Naive thymus-derived CD4-positive, alpha-beta T cell (primary cell): ENCODE measurements at regions of chr3 and their contacts with region 1.

Region 1: DNA sequence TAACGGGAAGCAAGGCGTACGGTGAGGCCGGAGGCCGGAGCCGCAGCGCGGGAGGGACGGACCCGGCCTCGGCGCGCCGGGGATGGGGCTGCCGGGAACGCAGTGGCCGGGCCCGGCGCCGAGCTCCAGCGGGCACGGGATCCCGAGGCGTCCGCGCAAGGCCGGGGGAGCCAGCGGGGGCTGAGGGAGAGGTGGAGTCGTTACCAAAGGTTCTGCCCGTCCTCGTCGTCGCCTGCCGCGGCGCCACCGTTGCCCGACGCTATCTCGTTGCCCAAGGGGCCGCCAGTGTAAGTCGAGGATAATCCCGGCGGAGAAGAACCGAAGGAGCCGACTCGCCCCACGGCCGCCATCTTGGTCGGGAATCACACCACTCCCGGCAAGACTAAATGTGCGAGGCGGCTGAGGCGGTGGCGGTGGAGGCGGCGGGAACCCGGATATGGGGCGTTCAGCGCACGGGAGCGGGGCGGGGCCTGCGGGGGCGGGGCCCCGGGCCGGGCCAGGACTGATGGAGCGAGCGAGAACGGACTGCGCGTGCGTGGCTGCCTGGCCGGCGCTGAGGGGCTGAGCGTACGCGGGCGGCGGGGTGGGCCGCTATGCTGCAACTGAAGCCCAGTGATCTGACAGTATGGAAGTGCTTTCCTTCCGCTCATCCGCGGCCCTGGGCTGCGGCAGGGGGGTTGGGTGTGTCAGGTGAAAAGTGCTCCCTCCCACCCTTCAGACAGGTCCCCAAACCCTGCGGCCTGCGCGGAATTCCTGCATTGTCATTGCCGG is at the start of gene DYNC1LI1:
- DNase-seq: peak; percentile 81 to 96 (median 88)
- ATAC-seq: peak; percentile 98
- H3K4me3 ChIP-seq: peak within 1 kb of the TSS; percentile 68
- H3K4me3 Mint-ChIP-seq: peak within 1 kb of the TSS; percentile 84 to 96 (median 92)
- H3K27ac ChIP-seq: peak within 1 kb of the TSS; percentile 90
- H3K27ac Mint-ChIP-seq: peak within 1 kb of the TSS; percentile 71 to 93 (median 86)
- H3K4me1 ChIP-seq: peaks cover 5 to 17% of the 10 kb centered on the region in 2 donors
- H3K4me1 Mint-ChIP-seq: peaks cover 0 to 39% (median 31%) of the 10 kb centered on the region in 7 donors
- H3K27me3 ChIP-seq: no peaks in the 10 kb centered on the region
- H3K27me3 Mint-ChIP-seq: no peaks in the 10 kb centered on the region
- total RNA-seq, gene DYNC1LI1: 26.1 to 28.5 (median 27.5) TPM

Region 2: GRCh38 chr3:32106280-32106928 is 464.2 kb before region 1 on chr3 and contains the start of gene GPD1L:
- CTCF ChIA-PET with region 1: no interaction called
- POLR2A ChIA-PET with region 1: no interaction called
- intact Hi-C with region 1: loop called in 1 of 2 experiments (anchors 2 kb)
- DNase-seq: peak; percentile 75 to 96 (median 86)
- ATAC-seq: peak; percentile 99
- H3K4me3 ChIP-seq: peak within 1 kb of the TSS; percentile 77
- H3K4me3 Mint-ChIP-seq: peak within 1 kb of the TSS; percentile 86 to 97 (median 94)
- H3K27ac ChIP-seq: peak within 1 kb of the TSS; percentile 68
- H3K27ac Mint-ChIP-seq: peak within 1 kb of the TSS; percentile 77 to 96 (median 82)
- H3K4me1 ChIP-seq: peaks cover 14 to 15% of the 10 kb centered on the region in 2 donors
- H3K4me1 Mint-ChIP-seq: peaks cover 14 to 44% (median 39%) of the 10 kb centered on the region in 7 donors
- H3K27me3 ChIP-seq: no peaks in the 10 kb centered on the region
- H3K27me3 Mint-ChIP-seq: no peaks in the 10 kb centered on the region
- total RNA-seq, gene GPD1L: 14.1 to 23.8 (median 21.4) TPM

Region 3: GRCh38 chr3:32391643-32392535 is 178.7 kb before region 1 on chr3 and contains the start of gene CMTM7:
- CTCF ChIA-PET with region 1: no interaction called
- POLR2A ChIA-PET with region 1: interaction called, 3 read pairs
- intact Hi-C with region 1: loop called in 1 of 2 experiments (anchors 5 kb)
- DNase-seq: peak; percentile 33 to 68 (median 62)
- ATAC-seq: peak; percentile 75
- H3K4me3 ChIP-seq: peak within 1 kb of the TSS; percentile 81
- H3K4me3 Mint-ChIP-seq: peak within 1 kb of the TSS; percentile 84 to 99 (median 98)
- H3K27ac ChIP-seq: peak within 1 kb of the TSS; percentile 83
- H3K27ac Mint-ChIP-seq: peak within 1 kb of the TSS; percentile 93 to 100 (median 98)
- H3K4me1 ChIP-seq: peaks cover 17 to 25% of the 10 kb centered on the region in 2 donors
- H3K4me1 Mint-ChIP-seq: peaks cover 30 to 70% (median 55%) of the 10 kb centered on the region in 7 donors
- H3K27me3 ChIP-seq: no peaks in the 10 kb centered on the region
- H3K27me3 Mint-ChIP-seq: no peaks in the 10 kb centered on the region
- total RNA-seq, gene CMTM7: 38.6 to 60.1 (median 49.5) TPM

Region 4: DNA sequence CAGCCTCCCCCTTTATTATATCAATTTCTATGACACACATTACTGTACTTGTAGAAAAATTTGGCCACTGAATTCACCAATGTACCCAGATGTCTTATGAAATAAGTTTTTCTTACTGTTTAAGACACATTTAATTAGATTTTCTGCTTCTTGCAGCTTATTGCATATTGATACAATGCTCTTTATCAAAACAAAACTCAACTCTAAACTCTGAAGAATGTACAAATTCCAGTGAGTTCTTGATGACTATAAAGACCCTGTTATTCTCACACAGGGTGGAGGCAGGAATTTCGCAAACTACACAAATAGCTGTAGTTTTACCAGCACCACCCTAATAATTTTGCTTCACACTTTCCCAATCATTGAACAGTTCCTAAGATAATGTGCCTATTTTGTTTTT is 90.0 kb before region 1 on chr3:
- CTCF ChIA-PET with region 1: no interaction called
- POLR2A ChIA-PET with region 1: no interaction called
- intact Hi-C with region 1: no loop called
- DNase-seq: no peak
- ATAC-seq: no peak
- H3K4me3 ChIP-seq: no peak overlapping the region
- H3K4me3 Mint-ChIP-seq: no peak overlapping the region
- H3K27ac ChIP-seq: no peak overlapping the region
- H3K27ac Mint-ChIP-seq: peak overlapping the region in 2 of 9 donors; percentile 5 to 11
- H3K4me1 ChIP-seq: no peaks in the 10 kb centered on the region
- H3K4me1 Mint-ChIP-seq: peaks cover 17 to 43% (median 22%) of the 10 kb centered on the region in 7 donors
- H3K27me3 ChIP-seq: no peaks in the 10 kb centered on the region
- H3K27me3 Mint-ChIP-seq: no peaks in the 10 kb centered on the region

Region 5: DNA sequence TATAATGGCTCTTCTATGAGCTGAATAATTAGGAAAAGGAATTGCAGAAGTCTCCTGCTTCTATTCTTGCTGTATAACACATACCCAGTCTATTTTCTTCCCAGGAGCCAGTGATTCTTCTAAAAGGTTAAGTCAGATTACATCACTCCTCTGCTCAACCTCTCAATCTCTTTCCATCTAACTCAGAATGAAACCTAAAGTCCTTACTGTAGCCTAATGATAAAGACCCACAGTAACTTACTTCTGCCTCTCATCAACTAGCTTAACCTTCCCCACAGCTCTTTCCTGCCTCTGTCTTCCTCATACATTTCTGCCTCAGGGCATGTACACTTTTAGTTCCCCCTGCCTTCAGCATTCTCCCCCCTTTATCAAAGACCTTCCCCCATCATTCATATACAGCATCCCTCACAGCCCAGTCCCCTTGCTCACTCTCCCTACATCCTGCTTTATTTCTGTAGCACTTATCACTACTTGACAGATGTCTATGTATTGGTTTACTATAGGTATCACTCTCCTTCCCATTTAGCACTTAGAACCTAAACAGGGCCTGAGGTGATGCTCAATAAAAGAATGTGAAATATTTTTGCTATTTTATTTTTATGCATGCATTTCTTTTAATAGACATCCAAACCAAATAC is 39.5 kb before region 1 on chr3:
- CTCF ChIA-PET with region 1: no interaction called
- POLR2A ChIA-PET with region 1: no interaction called
- intact Hi-C with region 1: loop called in 1 of 2 experiments (anchors 5 kb)
- DNase-seq: no peak
- ATAC-seq: no peak
- H3K4me3 ChIP-seq: no peak overlapping the region
- H3K4me3 Mint-ChIP-seq: no peak overlapping the region
- H3K27ac ChIP-seq: no peak overlapping the region
- H3K27ac Mint-ChIP-seq: peak overlapping the region in 5 of 9 donors; percentile 1 to 43 (median 26)
- H3K4me1 ChIP-seq: no peaks in the 10 kb centered on the region
- H3K4me1 Mint-ChIP-seq: peaks cover 0 to 6% (median 0%) of the 10 kb centered on the region in 7 donors
- H3K27me3 ChIP-seq: no peaks in the 10 kb centered on the region
- H3K27me3 Mint-ChIP-seq: no peaks in the 10 kb centered on the region

Region 6: DNA sequence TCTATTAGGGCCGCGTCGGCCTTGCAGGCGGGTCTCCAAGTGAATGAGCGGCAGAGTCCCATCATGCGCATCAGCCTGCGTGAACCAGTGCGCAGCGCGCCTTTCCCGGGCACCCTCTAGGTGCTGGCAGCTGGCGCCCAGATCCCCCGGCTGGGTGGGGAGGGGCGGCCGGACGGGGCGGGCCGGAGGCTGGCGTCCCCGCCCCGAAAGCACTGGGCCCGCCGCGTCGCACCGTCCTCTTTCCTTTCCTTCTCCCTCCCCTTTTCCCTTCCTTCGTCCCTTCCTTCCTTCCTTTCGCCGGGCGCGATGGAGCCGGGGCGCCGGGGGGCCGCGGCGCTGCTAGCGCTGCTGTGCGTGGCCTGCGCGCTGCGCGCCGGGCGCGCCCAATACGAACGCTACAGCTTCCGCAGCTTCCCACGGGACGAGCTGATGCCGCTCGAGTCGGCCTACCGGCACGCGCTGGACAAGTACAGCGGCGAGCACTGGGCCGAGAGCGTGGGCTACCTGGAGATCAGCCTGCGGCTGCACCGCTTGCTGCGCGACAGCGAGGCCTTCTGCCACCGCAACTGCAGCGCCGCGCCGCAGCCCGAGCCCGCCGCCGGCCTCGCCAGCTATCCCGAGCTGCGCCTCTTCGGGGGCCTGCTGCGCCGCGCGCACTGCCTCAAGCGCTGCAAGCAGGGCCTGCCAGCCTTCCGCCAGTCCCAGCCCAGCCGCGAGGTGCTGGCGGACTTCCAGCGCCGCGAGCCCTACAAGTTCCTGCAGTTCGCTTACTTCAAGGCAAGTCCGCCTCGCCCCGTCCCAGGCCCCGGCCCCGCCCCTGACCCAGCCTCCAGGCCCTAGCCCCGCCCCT is 543.4 kb after region 1 on chr3 and contains the start of gene CRTAP:
- CTCF ChIA-PET with region 1: no interaction called
- POLR2A ChIA-PET with region 1: no interaction called
- intact Hi-C with region 1: loop called in 1 of 2 experiments (anchors 5 kb)
- DNase-seq: peak; percentile 69 to 86 (median 79)
- ATAC-seq: peak; percentile 92
- H3K4me3 ChIP-seq: peak within 1 kb of the TSS; percentile 82
- H3K4me3 Mint-ChIP-seq: peak within 1 kb of the TSS; percentile 88 to 95 (median 92)
- H3K27ac ChIP-seq: peak within 1 kb of the TSS; percentile 69
- H3K27ac Mint-ChIP-seq: peak within 1 kb of the TSS; percentile 75 to 91 (median 85)
- H3K4me1 ChIP-seq: peaks cover 17 to 23% of the 10 kb centered on the region in 2 donors
- H3K4me1 Mint-ChIP-seq: peaks cover 23 to 52% (median 37%) of the 10 kb centered on the region in 7 donors
- H3K27me3 ChIP-seq: no peaks in the 10 kb centered on the region
- H3K27me3 Mint-ChIP-seq: no peaks in the 10 kb centered on the region
- total RNA-seq, gene CRTAP: 27.1 to 86.1 (median 46.4) TPM

Region 7: DNA sequence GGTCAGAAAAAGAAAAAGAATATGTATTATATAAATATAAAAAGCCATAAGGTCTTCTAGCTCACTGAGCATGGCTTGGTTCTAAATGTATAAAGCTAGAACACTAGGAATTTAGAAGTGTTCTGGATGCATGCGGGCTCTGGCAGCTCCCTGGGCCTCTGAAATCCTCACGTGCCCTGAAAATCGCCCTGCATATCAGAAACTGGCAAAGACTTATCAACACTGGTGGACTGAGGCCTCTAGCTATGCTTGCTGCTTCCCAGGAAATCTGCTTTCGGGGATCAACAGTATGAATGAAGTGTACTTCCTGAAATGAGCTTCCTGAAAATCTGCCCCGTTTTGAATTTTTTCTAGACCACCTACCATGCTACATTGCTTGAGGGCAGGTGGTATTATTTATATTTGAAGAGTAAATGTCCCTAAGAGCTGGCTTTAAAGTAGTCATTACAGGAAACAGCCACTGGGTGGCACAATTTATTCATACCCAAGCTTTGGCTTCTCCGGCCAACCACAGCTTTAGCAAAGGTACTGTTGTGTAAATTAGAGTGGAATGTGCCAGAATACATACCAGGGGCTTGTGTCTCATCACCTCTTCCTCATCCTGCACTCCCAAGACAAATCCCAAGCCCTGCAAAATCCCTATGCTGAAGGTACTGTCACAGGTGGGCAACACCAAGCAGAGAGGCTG is 560.9 kb after region 1 on chr3:
- CTCF ChIA-PET with region 1: no interaction called
- POLR2A ChIA-PET with region 1: no interaction called
- intact Hi-C with region 1: no loop called
- DNase-seq: peak in 6 of 9 donors; percentile 5 to 46 (median 37)
- ATAC-seq: peak; percentile 80
- H3K4me3 ChIP-seq: no peak overlapping the region
- H3K4me3 Mint-ChIP-seq: no peak overlapping the region
- H3K27ac ChIP-seq: no peak overlapping the region
- H3K27ac Mint-ChIP-seq: no peak overlapping the region
- H3K4me1 ChIP-seq: no peaks in the 10 kb centered on the region
- H3K4me1 Mint-ChIP-seq: peaks cover 2 to 12% (median 11%) of the 10 kb centered on the region in 7 donors
- H3K27me3 ChIP-seq: no peaks in the 10 kb centered on the region
- H3K27me3 Mint-ChIP-seq: no peaks in the 10 kb centered on the region